Prostate gland (tissue), 2 donors: ENCODE measurements at regions of chr3 and their contacts with region 1.

Region 1: DNA sequence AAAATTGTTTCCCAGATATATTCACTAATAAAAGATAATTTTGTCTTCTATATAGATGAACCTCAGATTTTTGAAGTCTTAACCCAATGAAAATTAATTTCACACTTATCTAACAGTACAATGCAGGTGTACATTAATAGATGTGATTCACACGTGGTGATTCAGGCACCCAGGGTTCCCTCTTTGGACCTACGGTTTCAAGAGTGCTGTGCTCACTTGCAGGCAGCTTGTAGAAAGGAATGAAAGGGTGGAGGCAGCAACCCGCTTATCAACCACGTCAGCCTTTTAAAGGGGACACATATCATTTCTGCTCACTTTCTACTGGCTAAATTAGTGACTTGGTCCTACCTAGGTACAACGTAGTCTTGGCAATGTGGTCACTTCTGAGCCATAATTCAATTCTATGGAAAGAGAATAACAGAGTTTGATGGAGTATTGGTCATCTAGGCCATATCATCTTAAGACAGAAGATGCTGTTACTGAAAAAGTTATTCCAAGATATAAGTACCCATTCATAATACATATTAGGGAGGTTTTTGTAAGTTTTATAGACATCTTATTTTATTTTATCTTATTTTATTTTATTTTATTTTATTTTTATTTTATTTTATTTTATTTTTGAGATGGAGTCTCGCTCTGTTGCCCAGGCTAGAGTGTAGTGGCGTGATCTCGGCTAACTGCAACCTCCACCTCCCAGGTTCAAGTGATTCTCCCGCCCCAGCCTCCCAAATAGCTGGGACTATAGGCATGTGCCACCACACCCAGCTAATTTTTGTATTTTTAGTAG is 37.9 kb downstream of the ACP3 start:
- DNase-seq: no peak
- H3K4me3 ChIP-seq: no peak overlapping the region
- H3K27ac ChIP-seq: peak overlapping the region in 1 of 2 donors; percentile 17
- H3K4me1 ChIP-seq: no peaks in the 10 kb centered on the region
- H3K27me3 ChIP-seq: no peaks in the 10 kb centered on the region
- CTCF ChIP-seq: no peak
- POLR2A ChIP-seq: no peak

Region 2: DNA sequence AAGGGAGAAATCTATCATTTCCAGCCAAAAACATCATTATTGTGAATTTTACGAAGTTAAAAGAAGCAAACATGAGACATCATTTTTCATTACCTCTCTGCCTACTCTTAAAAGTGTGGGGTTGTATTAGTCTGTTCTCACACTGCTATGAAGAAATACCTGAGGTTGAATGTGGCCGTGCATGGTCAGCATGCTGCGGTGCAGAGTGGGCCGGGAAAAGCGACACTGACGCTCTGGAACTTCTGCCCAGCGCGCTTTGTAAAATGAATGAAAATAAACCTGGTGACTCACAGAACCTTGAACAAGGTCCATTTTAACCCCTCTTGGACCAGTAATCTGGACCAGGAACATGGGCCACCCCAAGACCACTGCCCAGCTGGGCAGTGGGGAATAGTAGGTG is 31.1 kb after region 1 on chr3:
- intact Hi-C with region 1: no loop called
- DNase-seq: no peak
- H3K4me3 ChIP-seq: no peak overlapping the region
- H3K27ac ChIP-seq: no peak overlapping the region
- H3K4me1 ChIP-seq: no peaks in the 10 kb centered on the region
- H3K27me3 ChIP-seq: no peaks in the 10 kb centered on the region
- CTCF ChIP-seq: no peak
- POLR2A ChIP-seq: no peak

Region 3: GRCh38 chr3:132399054-132399929 is 44.2 kb after region 1 on chr3:
- intact Hi-C with region 1: loop called (anchors 2 kb)
- DNase-seq: peak; percentile 30
- H3K4me3 ChIP-seq: no peak overlapping the region
- H3K27ac ChIP-seq: no peak overlapping the region
- H3K4me1 ChIP-seq: no peaks in the 10 kb centered on the region
- H3K27me3 ChIP-seq: no peaks in the 10 kb centered on the region
- CTCF ChIP-seq: peak; percentile 23 to 83 (median 72)
- POLR2A ChIP-seq: no peak

Region 4: GRCh38 chr3:132416807-132417694 is 61.9 kb after region 1 on chr3 and contains the start of gene DNAJC13:
- intact Hi-C with region 1: no loop called
- DNase-seq: peak; percentile 90
- H3K4me3 ChIP-seq: peak within 1 kb of the TSS; percentile 81 to 90
- H3K27ac ChIP-seq: peak within 1 kb of the TSS; percentile 88 to 93
- H3K4me1 ChIP-seq: no peaks in the 10 kb centered on the region
- H3K27me3 ChIP-seq: no peaks in the 10 kb centered on the region
- CTCF ChIP-seq: no peak
- POLR2A ChIP-seq: peak; percentile 73
- total RNA-seq, gene DNAJC13: 25.0 to 46.2 TPM

Region 5: GRCh38 chr3:132464066-132464465 is 109.0 kb after region 1 on chr3:
- intact Hi-C with region 1: no loop called
- DNase-seq: no peak
- H3K4me3 ChIP-seq: no peak overlapping the region
- H3K27ac ChIP-seq: no peak overlapping the region
- H3K4me1 ChIP-seq: no peaks in the 10 kb centered on the region
- H3K27me3 ChIP-seq: no peaks in the 10 kb centered on the region
- CTCF ChIP-seq: no peak
- POLR2A ChIP-seq: no peak